Gastrocnemius medialis (tissue), 4 donors: ENCODE measurements at regions of chr12 and their contacts with region 1.

Region 1: DNA sequence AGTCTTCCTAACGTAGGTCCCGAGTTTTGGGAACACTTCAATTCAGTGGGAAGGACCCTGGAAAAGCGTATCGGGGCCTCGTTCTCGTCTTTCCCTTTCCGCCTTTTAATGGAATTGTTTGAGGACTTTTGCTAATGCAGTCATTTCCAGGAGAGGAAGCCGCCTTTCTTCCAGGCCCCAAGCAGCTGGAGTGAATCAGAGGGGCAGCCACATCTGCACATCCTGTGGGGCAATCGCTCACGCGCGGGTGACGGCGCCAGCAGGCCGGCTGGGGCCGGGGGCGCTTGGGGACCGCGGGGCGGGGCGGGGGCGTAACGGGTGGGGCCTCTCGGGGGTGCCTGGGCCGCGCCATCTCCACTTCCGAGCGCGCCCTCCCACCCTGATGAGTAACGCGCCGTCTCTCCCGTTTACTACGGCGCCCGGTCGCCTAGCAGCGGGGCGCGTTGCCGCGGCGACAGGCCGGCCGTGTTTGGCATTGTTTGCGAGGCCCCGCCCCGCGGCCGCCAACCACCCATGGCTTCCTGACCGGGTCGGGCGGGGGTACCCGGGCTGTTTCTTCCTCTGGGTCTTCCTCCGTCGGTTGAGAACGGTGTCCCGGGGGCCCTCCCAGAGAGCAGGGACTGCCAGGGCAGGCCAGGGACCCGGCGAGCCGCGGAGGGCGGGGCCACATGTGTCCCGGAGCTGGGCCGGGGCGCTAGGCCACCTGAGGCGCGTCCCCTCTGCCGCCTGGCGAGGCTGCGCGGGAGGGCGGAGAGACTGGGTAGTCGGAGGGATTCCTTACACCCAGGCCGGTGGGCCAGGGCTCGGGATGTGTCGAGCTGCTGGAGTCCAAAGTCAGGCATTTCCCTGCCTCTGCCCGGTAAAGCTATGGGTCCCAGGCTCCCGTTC is 2.3 kb downstream of the GSG1 start:
- DNase-seq: peak; percentile 71 to 79
- ATAC-seq: peak; percentile 60 to 62
- H3K4me3 ChIP-seq: peak overlapping the region; percentile 58 to 75 (median 65)
- H3K27ac ChIP-seq: peak overlapping the region; percentile 83 to 84 (median 83)
- H3K4me1 ChIP-seq: peaks cover 19 to 32% of the 10 kb centered on the region in 2 donors
- H3K27me3 ChIP-seq: no peaks in the 10 kb centered on the region
- CTCF ChIP-seq: no peak
- POLR2A ChIP-seq: peak in 1 of 2 donors; percentile 28

Region 2: DNA sequence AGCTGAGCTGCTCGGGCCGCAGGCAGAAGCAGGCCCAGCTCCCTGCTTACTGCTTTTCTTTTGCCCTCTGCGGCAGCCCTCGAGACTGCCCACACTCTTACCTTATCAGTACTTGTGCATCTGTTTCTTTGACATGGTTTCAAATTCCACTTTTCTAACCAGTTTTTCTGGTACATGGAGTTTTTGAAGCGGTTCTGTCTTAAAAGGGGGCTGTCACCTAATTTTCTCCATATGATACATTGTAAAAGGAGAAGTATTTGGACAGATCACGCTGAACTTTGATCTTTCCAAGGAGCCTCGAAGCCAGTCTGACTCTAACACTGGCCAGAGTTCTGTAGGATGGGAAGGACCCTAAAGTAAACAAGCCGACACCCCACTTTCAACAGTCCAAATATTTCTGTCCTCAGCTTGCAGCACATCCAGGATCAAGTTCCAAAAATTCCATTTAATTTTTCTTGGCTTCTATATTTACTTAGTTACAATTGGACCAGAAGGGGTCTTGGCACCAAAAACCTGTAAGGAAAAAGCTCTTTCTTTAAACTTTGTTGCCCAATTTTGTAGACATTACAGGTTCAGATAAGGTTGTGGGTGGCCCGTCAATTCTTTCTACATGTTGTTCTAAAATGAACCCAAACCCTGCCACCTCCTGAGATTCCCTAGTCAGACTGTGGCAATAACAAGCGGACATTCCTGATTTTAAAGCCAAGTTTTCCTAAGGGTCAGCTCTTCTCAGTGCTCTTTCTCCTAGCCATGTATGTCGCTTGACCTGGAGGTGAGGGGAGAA is 47.1 kb after region 1 on chr12:
- in situ Hi-C with region 1: no loop called
- intact Hi-C with region 1: loop called (anchors 5 kb)
- DNase-seq: peak in 1 of 2 donors; percentile 46
- ATAC-seq: peak; percentile 18 to 66
- H3K4me3 ChIP-seq: no peak overlapping the region
- H3K27ac ChIP-seq: peak overlapping the region; percentile 28 to 65 (median 40)
- H3K4me1 ChIP-seq: peaks cover 6% of the 10 kb centered on the region in 2 donors
- H3K27me3 ChIP-seq: no peaks in the 10 kb centered on the region
- CTCF ChIP-seq: no peak
- POLR2A ChIP-seq: no peak

Region 3: GRCh38 chr12:13196130-13196921 is 95.2 kb after region 1 on chr12 and contains the start of gene EMP1:
- in situ Hi-C with region 1: loop called in 3 of 4 experiments (anchors 5 to 25 kb)
- intact Hi-C with region 1: loop called (anchors 2 kb)
- DNase-seq: peak; percentile 73 to 88
- ATAC-seq: peak; percentile 77 to 85
- H3K4me3 ChIP-seq: peak within 1 kb of the TSS; percentile 46 to 67 (median 56)
- H3K27ac ChIP-seq: peak within 1 kb of the TSS; percentile 74 to 86 (median 81)
- H3K4me1 ChIP-seq: peaks cover 6 to 36% of the 10 kb centered on the region in 2 donors
- H3K27me3 ChIP-seq: peaks cover 0 to 4% (median 2%) of the 10 kb centered on the region in 3 donors
- CTCF ChIP-seq: no peak
- POLR2A ChIP-seq: peak; percentile 57 to 83
- total RNA-seq, gene EMP1: 33.5 to 111 (median 73.6) TPM

Region 4: GRCh38 chr12:13203034-13203922 is 102.2 kb after region 1 on chr12:
- in situ Hi-C with region 1: loop called (anchors 5 to 25 kb)
- intact Hi-C with region 1: no loop called
- DNase-seq: peak; percentile 41 to 69
- ATAC-seq: peak; percentile 61 to 63
- H3K4me3 ChIP-seq: peak overlapping the region in 1 of 4 donors; percentile 24
- H3K27ac ChIP-seq: peak overlapping the region; percentile 55 to 85 (median 70)
- H3K4me1 ChIP-seq: peaks cover 28 to 51% of the 10 kb centered on the region in 2 donors
- H3K27me3 ChIP-seq: peaks cover 0 to 9% (median under 1%) of the 10 kb centered on the region in 3 donors
- CTCF ChIP-seq: peak in 2 of 5 experiments; percentile 12 to 15
- POLR2A ChIP-seq: no peak

Region 5: GRCh38 chr12:13289653-13290289 is 188.6 kb after region 1 on chr12:
- in situ Hi-C with region 1: no loop called
- intact Hi-C with region 1: no loop called
- DNase-seq: peak; percentile 7 to 30
- ATAC-seq: peak; percentile 76 to 82
- H3K4me3 ChIP-seq: no peak overlapping the region
- H3K27ac ChIP-seq: no peak overlapping the region
- H3K4me1 ChIP-seq: no peaks in the 10 kb centered on the region
- H3K27me3 ChIP-seq: no peaks in the 10 kb centered on the region
- CTCF ChIP-seq: no peak
- POLR2A ChIP-seq: no peak